B cell (primary cell): ENCODE measurements at regions of chr3 and their contacts with region 1.

Region 1: DNA sequence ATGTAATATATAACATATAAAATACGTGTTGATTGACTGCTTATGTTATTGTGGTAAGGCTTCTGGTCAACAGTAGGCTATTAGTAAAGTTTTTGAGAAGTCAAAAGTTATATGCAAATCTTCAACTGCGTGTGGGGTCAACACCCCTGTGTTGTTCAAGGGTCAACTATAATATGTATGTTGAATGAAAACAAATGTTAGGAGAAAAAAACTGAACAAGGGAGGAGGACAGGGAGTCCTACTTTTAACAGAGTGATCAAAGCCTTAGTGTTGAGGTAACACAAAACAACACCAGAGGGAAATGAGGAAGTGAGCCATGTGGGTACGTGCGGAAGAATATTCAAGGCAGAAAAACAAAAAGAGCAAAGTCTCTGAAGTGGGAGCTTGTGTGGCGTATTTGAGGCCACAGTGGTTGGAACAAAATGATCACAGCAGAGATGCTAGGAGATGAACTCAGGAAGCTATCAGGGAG is 62.5 kb downstream of the SFMBT1 start:
- DNase-seq: peak; percentile 81
- ATAC-seq: peak; percentile 84
- H3K4me3 ChIP-seq: peak overlapping the region in 1 of 5 experiments; percentile 31
- H3K4me3 Mint-ChIP-seq: peak overlapping the region; percentile 24
- H3K27ac ChIP-seq: peak overlapping the region; percentile 63 to 87
- H3K27ac Mint-ChIP-seq: peak overlapping the region; percentile 92
- H3K4me1 ChIP-seq: peaks cover 31 to 35% of the 10 kb centered on the region in 2 donors
- H3K4me1 Mint-ChIP-seq: peaks cover 41% of the 10 kb centered on the region
- H3K27me3 ChIP-seq: no peaks in the 10 kb centered on the region
- H3K27me3 Mint-ChIP-seq: no peaks in the 10 kb centered on the region
- CTCF ChIP-seq: no peak

Region 2: GRCh38 chr3:52742418-52743041 is 240.8 kb before region 1 on chr3:
- CTCF ChIA-PET with region 1: interaction called, 11 read pairs
- POLR2A ChIA-PET with region 1: no interaction called
- intact Hi-C with region 1: no loop called
- DNase-seq: peak; percentile 58
- ATAC-seq: no peak
- H3K4me3 ChIP-seq: no peak overlapping the region
- H3K4me3 Mint-ChIP-seq: no peak overlapping the region
- H3K27ac ChIP-seq: no peak overlapping the region
- H3K27ac Mint-ChIP-seq: no peak overlapping the region
- H3K4me1 ChIP-seq: no peaks in the 10 kb centered on the region
- H3K4me1 Mint-ChIP-seq: no peaks in the 10 kb centered on the region
- H3K27me3 ChIP-seq: no peaks in the 10 kb centered on the region
- H3K27me3 Mint-ChIP-seq: no peaks in the 10 kb centered on the region
- CTCF ChIP-seq: peak; percentile 77

Region 3: GRCh38 chr3:52845691-52846431 is 137.5 kb before region 1 on chr3:
- CTCF ChIA-PET with region 1: interaction called, 10 read pairs
- POLR2A ChIA-PET with region 1: no interaction called
- intact Hi-C with region 1: no loop called
- DNase-seq: peak; percentile 36
- ATAC-seq: peak; percentile 33
- H3K4me3 ChIP-seq: no peak overlapping the region
- H3K4me3 Mint-ChIP-seq: no peak overlapping the region
- H3K27ac ChIP-seq: no peak overlapping the region
- H3K27ac Mint-ChIP-seq: no peak overlapping the region
- H3K4me1 ChIP-seq: no peaks in the 10 kb centered on the region
- H3K4me1 Mint-ChIP-seq: no peaks in the 10 kb centered on the region
- H3K27me3 ChIP-seq: no peaks in the 10 kb centered on the region
- H3K27me3 Mint-ChIP-seq: no peaks in the 10 kb centered on the region
- CTCF ChIP-seq: peak; percentile 69

Region 4: GRCh38 chr3:52907497-52907896 is 75.9 kb before region 1 on chr3:
- CTCF ChIA-PET with region 1: interaction called, 14 read pairs
- POLR2A ChIA-PET with region 1: no interaction called
- intact Hi-C with region 1: no loop called
- DNase-seq: no peak
- ATAC-seq: no peak
- H3K4me3 ChIP-seq: no peak overlapping the region
- H3K4me3 Mint-ChIP-seq: no peak overlapping the region
- H3K27ac ChIP-seq: no peak overlapping the region
- H3K27ac Mint-ChIP-seq: no peak overlapping the region
- H3K4me1 ChIP-seq: no peaks in the 10 kb centered on the region
- H3K4me1 Mint-ChIP-seq: no peaks in the 10 kb centered on the region
- H3K27me3 ChIP-seq: no peaks in the 10 kb centered on the region
- H3K27me3 Mint-ChIP-seq: no peaks in the 10 kb centered on the region
- CTCF ChIP-seq: peak; percentile 15

Region 5: DNA sequence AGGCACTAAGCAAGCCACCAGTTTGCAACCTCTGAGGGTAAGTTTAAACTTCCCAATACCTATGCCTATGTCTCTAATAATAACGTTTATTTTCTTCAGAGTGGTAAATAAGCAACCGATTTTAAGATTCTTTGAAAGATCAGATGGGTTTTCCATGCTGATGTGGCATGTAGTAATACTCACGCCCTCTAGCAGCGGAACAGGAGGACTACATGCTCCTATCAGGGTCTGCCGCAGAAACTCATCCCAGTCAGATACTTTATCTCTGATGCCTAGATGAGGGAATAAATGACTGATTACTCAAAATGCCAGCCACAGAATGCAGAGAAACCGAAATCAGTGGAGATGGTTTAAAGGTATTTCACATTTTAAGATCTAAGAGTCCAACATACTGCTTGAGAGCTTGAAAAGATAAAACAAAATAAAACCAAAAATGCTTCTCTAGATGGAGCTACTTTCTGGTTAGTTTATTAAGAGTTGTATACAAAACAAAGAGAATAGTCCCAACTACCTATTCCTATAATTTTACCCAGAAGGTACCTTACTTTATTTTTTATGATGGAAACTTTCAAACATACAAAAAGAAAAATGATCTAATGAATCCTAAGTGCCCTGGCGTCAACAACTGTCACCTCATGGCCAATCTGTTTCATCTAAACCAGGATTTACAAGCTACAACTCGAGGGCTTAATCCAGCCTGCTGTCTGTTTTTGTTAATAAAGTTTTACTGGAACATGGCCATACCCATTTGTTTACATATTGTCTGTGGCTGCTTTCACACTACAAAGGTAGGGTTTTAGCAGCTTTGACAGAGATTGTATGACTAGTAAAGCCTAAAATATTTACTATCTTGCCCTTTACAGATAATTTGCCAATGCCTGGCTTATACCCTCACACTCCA is 48.5 kb before region 1 on chr3:
- CTCF ChIA-PET with region 1: interaction called, 20 read pairs
- POLR2A ChIA-PET with region 1: no interaction called
- intact Hi-C with region 1: loop called (anchors 2 kb)
- DNase-seq: peak; percentile 69
- ATAC-seq: peak; percentile 87
- H3K4me3 ChIP-seq: no peak overlapping the region
- H3K4me3 Mint-ChIP-seq: no peak overlapping the region
- H3K27ac ChIP-seq: peak overlapping the region in 1 of 2 donors; percentile 50
- H3K27ac Mint-ChIP-seq: peak overlapping the region; percentile 53
- H3K4me1 ChIP-seq: peaks cover 19 to 20% of the 10 kb centered on the region in 2 donors
- H3K4me1 Mint-ChIP-seq: peaks cover 21% of the 10 kb centered on the region
- H3K27me3 ChIP-seq: no peaks in the 10 kb centered on the region
- H3K27me3 Mint-ChIP-seq: no peaks in the 10 kb centered on the region
- CTCF ChIP-seq: peak; percentile 83

Region 6: GRCh38 chr3:53016236-53016635 is 32.9 kb after region 1 on chr3:
- CTCF ChIA-PET with region 1: interaction called, 5 read pairs
- POLR2A ChIA-PET with region 1: interaction called, 6 read pairs
- intact Hi-C with region 1: loop called (anchors 5 kb)
- DNase-seq: no peak
- ATAC-seq: no peak
- H3K4me3 ChIP-seq: no peak overlapping the region
- H3K4me3 Mint-ChIP-seq: no peak overlapping the region
- H3K27ac ChIP-seq: no peak overlapping the region
- H3K27ac Mint-ChIP-seq: no peak overlapping the region
- H3K4me1 ChIP-seq: peaks cover 27 to 33% of the 10 kb centered on the region in 2 donors
- H3K4me1 Mint-ChIP-seq: peaks cover 42% of the 10 kb centered on the region
- H3K27me3 ChIP-seq: no peaks in the 10 kb centered on the region
- H3K27me3 Mint-ChIP-seq: no peaks in the 10 kb centered on the region
- CTCF ChIP-seq: no peak